PC-9 (cell line): ENCODE measurements at regions of chr22 and their contacts with region 1.

Region 1: GRCh38 chr22:35995772-35996171 is 32.9 kb downstream of the RBFOX2 start:
- DNase-seq: no peak
- H3K4me3 ChIP-seq: no peak overlapping the region
- H3K27ac ChIP-seq: no peak overlapping the region
- H3K4me1 ChIP-seq: 0 out of 2 replicates have a peak, but pooled peaks cover 3% of the 10 kb centered on the region
- H3K27me3 ChIP-seq: no peaks in the 10 kb centered on the region
- CTCF ChIP-seq: no peak

Region 2: GRCh38 chr22:35498026-35498800 is 497.6 kb before region 1 on chr22:
- CTCF ChIA-PET with region 1: no interaction called
- POLR2A ChIA-PET with region 1: interaction called, 10 read pairs
- intact Hi-C with region 1: no loop called
- DNase-seq: no peak
- H3K4me3 ChIP-seq: no peak overlapping the region
- H3K27ac ChIP-seq: no peak overlapping the region
- H3K4me1 ChIP-seq: no peaks in the 10 kb centered on the region
- H3K27me3 ChIP-seq: peaks cover 14% of the 10 kb centered on the region
- CTCF ChIP-seq: no peak

Region 3: GRCh38 chr22:35971456-35972119 is 24.2 kb before region 1 on chr22:
- CTCF ChIA-PET with region 1: interaction called, 14 read pairs
- POLR2A ChIA-PET with region 1: no interaction called
- intact Hi-C with region 1: no loop called
- DNase-seq: no peak
- H3K4me3 ChIP-seq: no peak overlapping the region
- H3K27ac ChIP-seq: no peak overlapping the region
- H3K4me1 ChIP-seq: peaks cover 16% of the 10 kb centered on the region
- H3K27me3 ChIP-seq: no peaks in the 10 kb centered on the region
- CTCF ChIP-seq: no peak

Region 4: DNA sequence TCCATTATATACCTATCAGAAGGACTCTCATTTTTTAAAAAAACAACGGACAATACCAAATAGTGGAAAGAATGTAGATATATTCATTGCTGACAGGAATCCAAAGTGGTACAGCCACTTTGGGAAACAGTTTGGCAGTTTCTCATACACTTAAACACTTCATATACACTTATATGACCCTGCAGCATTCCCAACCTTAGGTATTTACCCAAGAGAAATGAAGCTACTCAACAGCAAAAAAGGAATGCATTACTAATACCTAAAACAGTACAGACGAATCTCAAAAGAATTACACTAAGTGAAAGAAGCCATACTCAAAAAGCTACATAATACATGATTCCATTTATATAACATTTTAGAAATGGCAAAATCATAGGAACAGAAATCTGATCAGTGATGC is 18.6 kb before region 1 on chr22:
- CTCF ChIA-PET with region 1: no interaction called
- POLR2A ChIA-PET with region 1: interaction called, 13 read pairs
- intact Hi-C with region 1: no loop called
- DNase-seq: no peak
- H3K4me3 ChIP-seq: no peak overlapping the region
- H3K27ac ChIP-seq: no peak overlapping the region
- H3K4me1 ChIP-seq: peaks cover 6% of the 10 kb centered on the region
- H3K27me3 ChIP-seq: no peaks in the 10 kb centered on the region
- CTCF ChIP-seq: no peak

Region 5: GRCh38 chr22:36010882-36011281 is 15.1 kb after region 1 on chr22:
- CTCF ChIA-PET with region 1: no interaction called
- POLR2A ChIA-PET with region 1: no interaction called
- intact Hi-C with region 1: no loop called
- DNase-seq: no peak
- H3K4me3 ChIP-seq: no peak overlapping the region
- H3K27ac ChIP-seq: no peak overlapping the region
- H3K4me1 ChIP-seq: no peaks in the 10 kb centered on the region
- H3K27me3 ChIP-seq: no peaks in the 10 kb centered on the region
- CTCF ChIP-seq: no peak

Region 6: GRCh38 chr22:36191106-36191836 is 195.5 kb after region 1 on chr22:
- CTCF ChIA-PET with region 1: no interaction called
- POLR2A ChIA-PET with region 1: no interaction called
- intact Hi-C with region 1: no loop called
- DNase-seq: no peak
- H3K4me3 ChIP-seq: no peak overlapping the region
- H3K27ac ChIP-seq: no peak overlapping the region
- H3K4me1 ChIP-seq: no peaks in the 10 kb centered on the region
- H3K27me3 ChIP-seq: peaks cover 27% of the 10 kb centered on the region; the same call in 1 of the 2 replicates
- CTCF ChIP-seq: no peak